CD8-positive, alpha-beta memory T cell (primary cell): ENCODE measurements at regions of chr9 and their contacts with region 1.

Region 1: GRCh38 chr9:128361986-128362646 is 9.1 kb upstream of the URM1 start:
- DNase-seq: peak; percentile 47 to 74 (median 52)
- H3K4me3 ChIP-seq: peak overlapping the region; percentile 62
- H3K4me3 Mint-ChIP-seq: peak overlapping the region; percentile 40 to 84 (median 77)
- H3K27ac ChIP-seq: no peak overlapping the region
- H3K27ac Mint-ChIP-seq: peak overlapping the region in 6 of 8 donors; percentile 1 to 87 (median 47)
- H3K4me1 ChIP-seq: peaks cover 9% of the 10 kb centered on the region
- H3K4me1 Mint-ChIP-seq: peaks cover 5 to 12% (median 6%) of the 10 kb centered on the region in 3 donors
- H3K27me3 ChIP-seq: no peaks in the 10 kb centered on the region
- H3K27me3 Mint-ChIP-seq: peaks cover 6 to 8% of the 10 kb centered on the region in 2 donors

Region 2: DNA sequence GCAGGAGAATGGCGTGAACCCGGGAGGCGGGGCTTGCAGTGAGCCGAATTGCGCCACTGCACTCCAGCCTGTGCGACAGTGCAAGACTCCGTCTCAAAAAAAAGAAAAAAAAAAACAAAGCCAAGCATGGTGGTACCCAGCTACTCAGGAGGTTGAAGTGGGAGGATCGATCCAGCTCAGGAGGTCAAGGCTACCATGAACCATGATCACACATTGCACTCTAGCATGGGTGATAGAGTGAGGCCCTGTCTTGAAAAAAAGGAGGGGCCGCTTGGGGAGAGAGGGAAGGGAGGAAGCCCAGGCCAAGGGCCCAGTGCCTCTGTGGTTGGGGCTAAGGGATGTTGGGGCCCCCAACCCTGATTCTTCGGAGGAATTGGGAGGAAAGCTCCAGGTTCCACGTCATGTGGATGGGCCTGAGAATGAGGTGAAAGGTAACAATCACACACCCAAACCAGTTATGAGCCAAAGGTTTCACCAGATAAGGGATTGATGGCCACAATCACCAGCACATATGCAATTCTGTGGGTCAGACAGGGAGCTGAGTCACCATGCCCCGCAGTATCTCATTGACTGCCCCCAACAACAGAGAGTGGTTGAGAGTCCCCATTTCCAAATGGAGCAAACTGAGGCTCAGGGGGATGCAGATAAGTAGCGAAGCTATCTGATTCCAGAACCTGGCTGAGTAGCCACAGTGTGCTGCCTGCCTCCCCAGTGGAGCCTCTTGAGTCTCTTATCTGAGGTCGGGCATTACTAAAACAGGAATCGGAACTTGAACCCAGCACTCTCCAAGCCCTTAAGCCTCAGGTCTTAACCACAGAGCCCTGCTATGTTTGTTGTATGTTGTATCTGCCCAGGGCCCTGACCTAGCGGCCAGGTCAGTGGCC is 65.5 kb before region 1 on chr9:
- CTCF ChIA-PET with region 1: interaction called, 18 read pairs
- POLR2A ChIA-PET with region 1: no interaction called
- DNase-seq: no peak
- H3K4me3 ChIP-seq: no peak overlapping the region
- H3K4me3 Mint-ChIP-seq: no peak overlapping the region
- H3K27ac ChIP-seq: peak overlapping the region; percentile 51
- H3K27ac Mint-ChIP-seq: peak overlapping the region in 2 of 8 donors; percentile 19 to 26
- H3K4me1 ChIP-seq: peaks cover 4% of the 10 kb centered on the region
- H3K4me1 Mint-ChIP-seq: peaks cover 2 to 4% (median 2%) of the 10 kb centered on the region in 3 donors
- H3K27me3 ChIP-seq: no peaks in the 10 kb centered on the region
- H3K27me3 Mint-ChIP-seq: no peaks in the 10 kb centered on the region

Region 3: DNA sequence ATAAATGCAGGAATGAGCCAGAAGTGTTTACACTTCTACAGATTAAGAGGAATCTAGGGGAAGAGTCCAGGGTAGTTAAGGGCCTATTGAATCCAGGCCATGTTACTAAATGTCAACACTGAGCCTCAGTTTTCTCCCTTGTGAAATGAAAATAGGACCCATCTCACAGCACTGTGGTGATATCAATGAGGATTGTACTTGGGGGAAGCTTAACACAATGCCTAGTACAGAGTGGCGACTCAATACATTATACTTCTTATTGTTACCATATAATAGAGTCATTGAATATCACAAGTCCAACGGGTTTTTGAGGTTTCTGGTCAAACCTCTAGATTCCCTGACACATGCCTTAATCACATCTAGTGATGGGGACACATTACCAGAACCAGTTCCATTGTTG is 44.5 kb before region 1 on chr9:
- CTCF ChIA-PET with region 1: no interaction called
- POLR2A ChIA-PET with region 1: no interaction called
- DNase-seq: no peak
- H3K4me3 ChIP-seq: no peak overlapping the region
- H3K4me3 Mint-ChIP-seq: peak overlapping the region in 1 of 7 donors; percentile 68
- H3K27ac ChIP-seq: no peak overlapping the region
- H3K27ac Mint-ChIP-seq: peak overlapping the region in 1 of 8 donors; percentile 65
- H3K4me1 ChIP-seq: peaks cover 9% of the 10 kb centered on the region
- H3K4me1 Mint-ChIP-seq: peaks cover 8 to 13% (median 13%) of the 10 kb centered on the region in 3 donors
- H3K27me3 ChIP-seq: no peaks in the 10 kb centered on the region
- H3K27me3 Mint-ChIP-seq: no peaks in the 10 kb centered on the region

Region 4: DNA sequence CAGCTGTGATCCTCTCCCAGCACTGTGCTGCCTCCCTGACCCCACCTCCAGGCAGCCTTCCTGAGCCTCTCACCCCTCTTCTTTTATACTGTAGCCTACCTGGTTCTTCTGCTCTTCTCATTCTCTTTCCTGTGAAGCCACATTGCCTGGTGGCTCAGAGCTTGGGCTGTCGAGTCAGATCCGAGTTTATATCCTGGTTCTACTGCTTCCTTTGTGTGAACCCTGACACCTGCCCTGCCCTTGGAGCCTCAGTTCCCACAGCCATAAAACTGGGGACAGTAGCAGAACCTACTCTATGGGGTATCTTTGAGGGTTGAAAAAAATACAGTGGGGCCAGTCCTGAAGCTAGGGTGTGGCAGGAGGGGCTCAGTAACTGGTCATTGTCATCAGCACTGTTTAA is 13.0 kb before region 1 on chr9:
- CTCF ChIA-PET with region 1: interaction called, 12 read pairs
- POLR2A ChIA-PET with region 1: no interaction called
- DNase-seq: no peak
- H3K4me3 ChIP-seq: no peak overlapping the region
- H3K4me3 Mint-ChIP-seq: no peak overlapping the region
- H3K27ac ChIP-seq: no peak overlapping the region
- H3K27ac Mint-ChIP-seq: no peak overlapping the region
- H3K4me1 ChIP-seq: no peaks in the 10 kb centered on the region
- H3K4me1 Mint-ChIP-seq: no peaks in the 10 kb centered on the region
- H3K27me3 ChIP-seq: no peaks in the 10 kb centered on the region
- H3K27me3 Mint-ChIP-seq: no peaks in the 10 kb centered on the region

Region 5: GRCh38 chr9:128409998-128410397 is 47.9 kb after region 1 on chr9:
- CTCF ChIA-PET with region 1: interaction called, 10 read pairs
- POLR2A ChIA-PET with region 1: no interaction called
- DNase-seq: no peak
- H3K4me3 ChIP-seq: no peak overlapping the region
- H3K4me3 Mint-ChIP-seq: no peak overlapping the region
- H3K27ac ChIP-seq: no peak overlapping the region
- H3K27ac Mint-ChIP-seq: no peak overlapping the region
- H3K4me1 ChIP-seq: no peaks in the 10 kb centered on the region
- H3K4me1 Mint-ChIP-seq: no peaks in the 10 kb centered on the region
- H3K27me3 ChIP-seq: no peaks in the 10 kb centered on the region
- H3K27me3 Mint-ChIP-seq: peaks cover 25 to 63% of the 10 kb centered on the region in 2 donors

Region 6: DNA sequence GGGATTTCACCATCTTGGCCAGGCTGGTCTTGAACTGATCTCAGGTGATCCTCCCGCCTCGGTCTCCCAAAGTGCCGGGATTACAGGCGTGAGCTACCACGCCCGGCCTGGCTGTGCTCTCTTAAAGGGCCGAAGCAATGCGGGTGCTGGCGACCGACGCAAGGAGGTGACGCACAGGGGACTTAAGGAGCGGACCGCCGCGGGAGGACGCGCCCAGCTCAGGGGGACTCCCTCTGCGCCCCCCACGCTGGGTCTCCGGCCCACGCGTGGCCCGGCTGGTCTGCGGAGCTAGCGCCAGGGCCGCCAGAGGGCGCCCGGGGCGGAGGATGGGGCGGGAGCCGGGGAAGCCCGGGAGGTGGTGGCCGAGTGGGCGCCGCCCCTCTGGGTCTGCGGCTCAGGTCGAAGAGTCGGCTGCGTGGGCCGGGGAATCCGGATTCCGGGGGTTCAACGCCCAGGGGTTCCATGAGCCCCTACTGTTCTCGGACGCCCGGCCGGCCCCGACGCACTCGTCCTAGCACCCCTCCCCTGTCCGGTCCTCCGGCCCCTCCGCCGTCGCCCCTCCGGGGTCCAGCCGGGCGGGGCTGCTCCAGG is 58.0 kb after region 1 on chr9:
- CTCF ChIA-PET with region 1: interaction called, 10 read pairs
- POLR2A ChIA-PET with region 1: no interaction called
- DNase-seq: peak; percentile 47 to 74 (median 57)
- H3K4me3 ChIP-seq: peak overlapping the region; percentile 64
- H3K4me3 Mint-ChIP-seq: peak overlapping the region; percentile 73 to 88 (median 78)
- H3K27ac ChIP-seq: peak overlapping the region; percentile 31
- H3K27ac Mint-ChIP-seq: peak overlapping the region in 2 of 8 donors; percentile 68 to 85
- H3K4me1 ChIP-seq: peaks cover 13% of the 10 kb centered on the region
- H3K4me1 Mint-ChIP-seq: peaks cover 0 to 11% (median 1%) of the 10 kb centered on the region in 3 donors
- H3K27me3 ChIP-seq: peaks cover 7% of the 10 kb centered on the region
- H3K27me3 Mint-ChIP-seq: peaks cover 19 to 26% of the 10 kb centered on the region in 2 donors